ENCODE measurements at regions of chr9 and their contacts with region 1.

Region 1: GRCh38 chr9:96875461-96876364 is 21.4 kb upstream of the ZNF782 start:
- DNase-seq: peak; percentile 83
- ATAC-seq: peak; percentile 89
- H3K4me3 ChIP-seq: peak overlapping the region; percentile 50 to 63
- H3K27ac ChIP-seq: peak overlapping the region; percentile 32
- H3K4me1 ChIP-seq: peaks cover 3 to 26% of the 10 kb centered on the region in 2 experiments; a peak in 3 of 4 replicates
- H3K27me3 ChIP-seq: no peaks in the 10 kb centered on the region
- CTCF ChIP-seq: peak; percentile 25 to 51 (median 44); a peak in 5 of 6 replicates
- POLR2A ChIP-seq: no peak
- RAD21 ChIP-seq: peak; percentile 12; the same call in 1 of the 2 replicates

Region 2: GRCh38 chr9:96398582-96399324 is 477.0 kb before region 1 on chr9:
- CTCF ChIA-PET with region 1: no interaction called
- POLR2A ChIA-PET with region 1: no interaction called
- RAD21 ChIA-PET with region 1: no interaction called
- intact Hi-C with region 1: no loop called
- DNase-seq: no peak
- ATAC-seq: peak; percentile 52; the same call in 1 of the 2 replicates
- H3K4me3 ChIP-seq: no peak overlapping the region
- H3K27ac ChIP-seq: no peak overlapping the region
- H3K4me1 ChIP-seq: peaks cover 0 to 2% of the 10 kb centered on the region in 2 experiments; a peak in 1 of 4 replicates
- H3K27me3 ChIP-seq: no peaks in the 10 kb centered on the region
- CTCF ChIP-seq: no peak
- POLR2A ChIP-seq: no peak
- RAD21 ChIP-seq: no peak

Region 3: GRCh38 chr9:97109194-97109811 is 233.6 kb after region 1 on chr9:
- CTCF ChIA-PET with region 1: interaction called, 4 read pairs
- POLR2A ChIA-PET with region 1: no interaction called
- RAD21 ChIA-PET with region 1: no interaction called
- intact Hi-C with region 1: loop called (anchors 5 kb)
- DNase-seq: peak; percentile 69
- ATAC-seq: peak; percentile 99
- H3K4me3 ChIP-seq: no peak overlapping the region
- H3K27ac ChIP-seq: no peak overlapping the region
- H3K4me1 ChIP-seq: peaks cover 3 to 13% of the 10 kb centered on the region in 2 experiments; a peak in 2 of 4 replicates
- H3K27me3 ChIP-seq: no peaks in the 10 kb centered on the region
- CTCF ChIP-seq: peak; percentile 77 to 79 (median 77); a peak in 5 of 6 replicates
- POLR2A ChIP-seq: no peak
- RAD21 ChIP-seq: peak; percentile 96

Measured in HCT116 (cell line).